Activated CD8-positive, alpha-beta memory T cell treated with anti-CD3 and anti-CD28 coated beads, Interleukin-2, amount 10 ng/mL, durations not matched to agents 7 days and 5 days (primary cell): ENCODE measurements at regions of chr22 and their contacts with region 1.

Region 1: GRCh38 chr22:24156913-24157821 is 24.1 kb upstream of the SUSD2 start:
- DNase-seq: peak; percentile 96
- ATAC-seq: peak; percentile 76
- H3K4me3 Mint-ChIP-seq: peak overlapping the region; percentile 93
- H3K27ac Mint-ChIP-seq: peak overlapping the region; percentile 94
- H3K4me1 Mint-ChIP-seq: peaks cover 54% of the 10 kb centered on the region
- H3K27me3 Mint-ChIP-seq: no peaks in the 10 kb centered on the region

Region 2: GRCh38 chr22:24011735-24012068 is 145.5 kb before region 1 on chr22:
- CTCF ChIA-PET with region 1: interaction called, 13 read pairs
- DNase-seq: no peak
- ATAC-seq: no peak
- H3K4me3 Mint-ChIP-seq: peak overlapping the region; percentile 91
- H3K27ac Mint-ChIP-seq: peak overlapping the region; percentile 87
- H3K4me1 Mint-ChIP-seq: peaks cover 36% of the 10 kb centered on the region
- H3K27me3 Mint-ChIP-seq: no peaks in the 10 kb centered on the region

Region 3: DNA sequence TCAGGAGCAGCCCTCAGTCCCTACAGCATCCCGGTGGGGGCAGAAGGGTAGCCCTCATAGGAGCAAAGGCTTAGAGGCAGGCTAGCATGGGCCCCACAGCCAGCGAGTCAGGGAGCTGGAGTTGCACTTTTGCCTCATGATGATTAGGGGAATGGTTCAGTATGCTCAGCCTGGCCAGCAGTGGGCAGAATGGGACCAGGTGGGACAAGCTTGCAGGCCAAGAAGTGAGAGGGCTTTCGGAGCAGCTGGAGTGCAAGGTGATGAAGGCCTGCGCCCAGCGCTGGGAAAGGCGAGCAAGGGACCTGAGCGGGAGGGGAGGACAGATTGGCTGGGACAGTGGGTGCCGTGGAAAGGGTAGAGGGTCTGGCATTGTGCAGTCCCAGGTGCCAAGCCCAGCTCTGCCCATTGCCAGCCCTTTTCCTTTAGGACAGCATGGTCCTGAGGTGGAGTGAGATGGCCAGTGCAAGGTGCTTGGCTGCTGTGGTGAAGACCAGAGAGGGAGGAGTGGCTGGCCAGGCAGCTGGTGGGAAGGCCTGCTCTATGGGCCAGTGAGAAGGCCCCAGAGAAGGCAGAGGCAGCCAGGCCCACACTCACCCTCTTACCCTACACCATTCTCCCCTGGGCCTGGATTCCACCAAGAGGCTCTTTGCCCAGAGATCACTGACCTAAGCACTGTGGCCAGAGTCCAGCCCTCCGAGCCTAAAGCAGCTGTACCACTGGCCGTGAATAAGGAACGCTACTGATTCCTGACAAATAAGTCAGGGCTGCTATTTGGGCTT is 23.8 kb before region 1 on chr22:
- CTCF ChIA-PET with region 1: interaction called, 44 read pairs
- DNase-seq: no peak
- ATAC-seq: peak; percentile 31
- H3K4me3 Mint-ChIP-seq: no peak overlapping the region
- H3K27ac Mint-ChIP-seq: peak overlapping the region; percentile 35
- H3K4me1 Mint-ChIP-seq: peaks cover 14% of the 10 kb centered on the region
- H3K27me3 Mint-ChIP-seq: no peaks in the 10 kb centered on the region

Region 4: DNA sequence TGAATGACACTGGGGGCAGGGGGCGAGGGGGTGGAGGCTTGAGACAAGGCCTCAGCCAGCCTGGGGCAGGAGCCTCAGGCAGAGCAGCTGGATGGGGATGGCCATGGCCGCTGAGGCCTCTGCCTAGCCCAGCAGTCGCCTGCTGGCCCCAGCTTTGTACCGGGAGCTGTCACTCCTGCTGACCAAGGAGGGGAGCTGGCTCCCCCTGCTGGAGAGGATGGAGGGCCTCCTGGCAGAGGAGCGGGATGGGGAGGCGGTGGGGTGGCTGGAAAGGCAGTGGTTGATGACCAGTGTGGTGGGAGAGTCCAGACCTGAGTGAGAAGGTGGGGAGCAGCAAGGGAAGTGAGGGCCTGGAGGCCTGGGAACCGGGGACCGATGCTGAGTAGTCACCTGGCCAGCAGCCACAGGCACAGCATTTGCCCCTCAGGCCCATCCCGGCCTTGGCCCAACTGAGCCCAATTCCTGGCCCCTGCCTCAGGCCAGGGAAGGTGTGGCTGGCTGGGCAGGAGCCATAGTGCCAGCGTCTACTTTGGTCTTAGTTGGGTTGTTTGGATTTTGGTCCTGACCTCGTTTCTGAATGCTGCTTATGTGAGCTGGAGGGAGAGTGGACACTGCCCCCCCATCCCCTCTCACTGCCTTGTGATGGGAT is 18.1 kb after region 1 on chr22:
- CTCF ChIA-PET with region 1: interaction called, 26 read pairs
- DNase-seq: peak; percentile 76
- ATAC-seq: peak; percentile 69
- H3K4me3 Mint-ChIP-seq: no peak overlapping the region
- H3K27ac Mint-ChIP-seq: peak overlapping the region; percentile 42
- H3K4me1 Mint-ChIP-seq: no peaks in the 10 kb centered on the region
- H3K27me3 Mint-ChIP-seq: no peaks in the 10 kb centered on the region

Region 5: DNA sequence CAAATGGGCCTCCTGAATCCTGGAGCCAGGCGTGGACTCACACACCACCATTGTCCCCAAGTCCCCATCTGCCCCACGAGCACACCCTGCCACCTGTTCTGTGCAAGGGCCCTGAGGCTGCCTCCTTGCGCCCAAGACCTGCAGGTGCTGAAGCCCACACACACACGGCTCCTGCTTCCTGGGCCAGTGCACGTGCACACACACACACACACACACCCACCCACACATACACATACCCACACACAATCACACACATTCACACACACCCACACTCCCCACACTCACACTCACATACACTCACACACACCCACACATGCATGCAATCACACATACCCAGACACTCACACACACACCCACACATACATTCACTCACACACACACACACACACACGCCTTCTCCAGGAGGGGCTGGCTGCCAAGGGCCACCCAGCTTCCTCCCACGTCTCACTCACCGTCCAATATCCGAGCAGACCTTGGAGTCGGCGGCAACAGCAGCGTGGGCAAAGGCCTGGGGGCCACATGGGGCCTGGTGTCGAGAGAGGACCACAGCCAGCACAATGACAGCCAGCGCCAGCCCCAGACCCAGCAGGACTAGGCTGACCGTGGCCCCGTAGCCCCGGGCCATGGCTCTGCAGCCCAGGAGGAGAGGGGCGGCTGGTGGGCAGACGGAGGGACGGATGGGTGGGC is 87.1 kb after region 1 on chr22:
- CTCF ChIA-PET with region 1: interaction called, 10 read pairs
- DNase-seq: no peak
- ATAC-seq: no peak
- H3K4me3 Mint-ChIP-seq: no peak overlapping the region
- H3K27ac Mint-ChIP-seq: peak overlapping the region; percentile 33
- H3K4me1 Mint-ChIP-seq: peaks cover 38% of the 10 kb centered on the region
- H3K27me3 Mint-ChIP-seq: no peaks in the 10 kb centered on the region